ENCODE measurements at regions of chr3 and their contacts with region 1.

Region 1: DNA sequence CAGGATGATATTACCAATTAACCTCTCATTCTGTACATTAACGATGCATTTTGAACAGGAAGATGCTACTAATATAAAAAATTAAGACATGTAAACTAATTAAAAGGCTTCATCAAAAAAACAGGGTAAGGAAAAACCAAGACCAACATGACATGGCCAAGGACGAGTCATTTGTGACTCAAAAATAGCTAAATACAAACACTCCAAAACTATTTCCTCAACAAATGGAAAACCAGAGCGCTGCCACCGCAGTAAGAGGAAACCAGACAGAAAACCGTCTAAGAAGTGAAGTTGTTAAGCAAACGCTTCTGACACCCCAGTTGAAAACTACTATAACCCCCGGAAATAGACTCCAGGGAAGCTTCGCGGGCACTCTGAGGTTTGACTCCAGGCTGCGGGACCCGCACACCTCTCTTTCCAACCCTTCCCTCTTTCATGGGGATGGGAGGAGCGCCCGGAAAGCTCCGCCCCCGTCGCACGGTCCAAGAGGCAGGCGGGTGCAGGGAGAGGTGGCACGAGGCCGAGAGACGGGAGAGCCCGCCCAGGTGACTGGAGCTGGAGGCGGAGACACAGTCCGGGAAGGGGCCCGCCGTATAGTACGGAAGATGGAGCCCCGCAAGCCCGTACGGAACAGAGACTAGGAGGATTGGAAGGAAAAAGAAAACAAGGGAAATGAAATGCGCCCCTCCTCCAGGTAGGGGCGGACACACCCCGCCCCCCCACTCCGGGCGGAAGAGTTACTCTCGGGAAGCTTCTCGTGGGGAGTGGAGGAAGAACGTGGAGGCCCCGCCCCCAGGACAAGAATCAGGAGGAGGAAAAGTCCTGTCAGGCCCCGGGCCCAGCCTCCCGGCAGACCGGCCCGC is 708 bp downstream of the DCAF1 start:
- DNase-seq: peak; percentile 94
- ATAC-seq: peak; percentile 77
- H3K4me3 ChIP-seq: peak overlapping the region; percentile 83
- H3K27ac ChIP-seq: peak overlapping the region; percentile 86
- H3K4me1 ChIP-seq: peaks cover 12% of the 10 kb centered on the region
- H3K27me3 ChIP-seq: no peaks in the 10 kb centered on the region
- CTCF ChIP-seq: no peak

Region 2: DNA sequence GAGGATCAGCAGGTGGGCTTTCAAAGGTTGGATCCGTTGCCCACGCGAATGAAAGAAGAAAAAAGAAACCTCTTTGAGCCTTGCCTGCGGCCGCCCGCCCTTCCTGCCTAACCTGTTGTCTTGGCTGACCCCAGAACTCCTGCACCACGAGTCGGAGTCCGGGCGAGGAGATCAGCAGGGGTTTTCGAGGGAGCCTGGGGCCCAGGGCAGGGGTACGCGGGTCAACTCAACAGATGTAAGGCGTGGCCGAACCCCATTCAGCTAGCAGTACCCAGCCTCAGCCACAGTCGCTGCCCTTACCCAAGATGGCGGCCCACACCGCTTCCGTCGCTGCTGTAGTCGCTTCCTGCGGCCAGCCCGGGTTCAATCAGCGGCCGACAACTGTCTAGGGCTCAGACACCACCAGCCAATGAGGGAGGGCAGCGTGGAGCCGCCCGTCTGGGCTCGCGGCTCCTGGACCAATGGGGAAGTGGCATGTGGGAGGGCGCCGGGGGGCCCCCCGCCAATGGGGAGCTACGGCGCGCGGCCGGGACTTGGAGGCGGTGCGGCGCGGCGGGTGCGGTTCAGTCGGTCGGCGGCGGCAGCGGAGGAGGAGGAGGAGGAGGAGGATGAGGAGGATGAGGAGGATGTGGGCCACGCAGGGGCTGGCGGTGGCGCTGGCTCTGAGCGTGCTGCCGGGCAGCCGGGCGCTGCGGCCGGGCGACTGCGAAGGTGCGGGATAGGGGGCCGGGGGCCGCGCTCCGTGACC is 114.2 kb before region 1 on chr3 and contains the start of gene MANF:
- CTCF ChIA-PET with region 1: no interaction called
- POLR2A ChIA-PET with region 1: interaction called, 13 read pairs
- intact Hi-C with region 1: no loop called
- DNase-seq: peak; percentile 98
- ATAC-seq: peak; percentile 91
- H3K4me3 ChIP-seq: peak within 1 kb of the TSS; percentile 85
- H3K27ac ChIP-seq: peak within 1 kb of the TSS; percentile 79
- H3K4me1 ChIP-seq: peaks cover 40% of the 10 kb centered on the region
- H3K27me3 ChIP-seq: no peaks in the 10 kb centered on the region
- CTCF ChIP-seq: no peak
- total RNA-seq, gene MANF: 200 and 221 TPM in 2 replicates

Region 3: GRCh38 chr3:51538459-51539290 is 39.6 kb after region 1 on chr3 and contains the start of gene RAD54L2:
- CTCF ChIA-PET with region 1: interaction called, 3 read pairs
- POLR2A ChIA-PET with region 1: interaction called, 42 read pairs
- intact Hi-C with region 1: loop called (anchors 1 kb)
- DNase-seq: peak; percentile 89
- ATAC-seq: peak; percentile 84
- H3K4me3 ChIP-seq: peak within 1 kb of the TSS; percentile 85
- H3K27ac ChIP-seq: peak within 1 kb of the TSS; percentile 35
- H3K4me1 ChIP-seq: peaks cover 14% of the 10 kb centered on the region
- H3K27me3 ChIP-seq: no peaks in the 10 kb centered on the region
- CTCF ChIP-seq: peak; percentile 33; the same call in 1 of the 2 replicates
- total RNA-seq, gene RAD54L2: 14.3 and 17.7 TPM in 2 replicates

Region 4: DNA sequence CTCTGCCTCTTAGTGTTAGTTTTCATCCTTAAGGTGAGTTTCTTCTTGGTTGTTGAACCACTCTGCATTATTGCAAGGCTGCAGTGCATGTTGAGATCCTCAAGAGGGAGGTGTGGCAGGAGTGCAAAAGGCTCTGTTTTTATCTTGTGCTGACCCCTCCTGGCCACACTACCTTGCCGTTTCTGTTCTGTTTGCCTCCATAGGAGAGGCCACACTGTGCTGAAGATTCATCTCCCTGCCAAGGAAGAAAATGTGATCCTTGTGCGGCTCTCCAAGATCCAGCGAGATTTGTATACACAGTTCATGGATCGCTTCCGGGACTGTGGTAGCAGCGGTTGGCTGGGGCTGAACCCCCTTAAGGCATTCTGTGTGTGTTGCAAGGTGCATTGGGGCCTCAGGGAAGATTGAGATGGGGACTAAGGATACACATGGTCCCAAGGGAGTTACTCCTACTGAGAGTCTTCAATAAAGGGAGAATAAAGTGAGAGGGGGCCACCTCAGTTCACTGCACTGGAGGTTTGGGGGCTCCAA is 138.9 kb after region 1 on chr3:
- CTCF ChIA-PET with region 1: interaction called, 3 read pairs
- POLR2A ChIA-PET with region 1: no interaction called
- intact Hi-C with region 1: loop called (anchors 1 kb)
- DNase-seq: peak; percentile 76
- ATAC-seq: peak; percentile 91
- H3K4me3 ChIP-seq: peak overlapping the region; percentile 28; the same call in 1 of the 2 replicates
- H3K27ac ChIP-seq: peak overlapping the region; percentile 44
- H3K4me1 ChIP-seq: peaks cover 10% of the 10 kb centered on the region
- H3K27me3 ChIP-seq: no peaks in the 10 kb centered on the region
- CTCF ChIP-seq: peak; percentile 99

Region 5: DNA sequence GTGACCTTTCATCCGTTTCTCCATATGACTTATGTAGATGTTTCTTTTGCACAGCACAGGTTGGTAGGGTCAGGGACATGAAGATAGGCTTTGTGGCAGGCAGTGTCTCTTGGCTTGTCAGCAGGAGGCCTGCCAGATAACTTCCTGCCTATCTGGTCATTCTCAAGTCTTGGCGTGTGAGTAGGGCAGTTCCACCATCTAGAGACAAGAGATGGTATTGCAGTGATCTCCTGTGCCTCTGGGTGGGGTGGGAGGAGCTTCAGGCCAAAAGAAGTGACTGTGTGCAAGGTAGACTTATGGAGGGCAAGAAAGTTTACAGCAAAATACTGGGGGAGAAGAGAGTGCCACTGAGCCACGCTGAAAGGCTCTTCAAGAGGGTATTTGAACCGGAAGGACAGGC is 183.0 kb after region 1 on chr3:
- CTCF ChIA-PET with region 1: interaction called, 73 read pairs
- POLR2A ChIA-PET with region 1: interaction called, 6 read pairs
- intact Hi-C with region 1: loop called (anchors 1 kb)
- DNase-seq: peak; percentile 93
- ATAC-seq: peak; percentile 84
- H3K4me3 ChIP-seq: no peak overlapping the region
- H3K27ac ChIP-seq: no peak overlapping the region
- H3K4me1 ChIP-seq: peaks cover 24% of the 10 kb centered on the region
- H3K27me3 ChIP-seq: no peaks in the 10 kb centered on the region
- CTCF ChIP-seq: peak; percentile 89

Region 6: DNA sequence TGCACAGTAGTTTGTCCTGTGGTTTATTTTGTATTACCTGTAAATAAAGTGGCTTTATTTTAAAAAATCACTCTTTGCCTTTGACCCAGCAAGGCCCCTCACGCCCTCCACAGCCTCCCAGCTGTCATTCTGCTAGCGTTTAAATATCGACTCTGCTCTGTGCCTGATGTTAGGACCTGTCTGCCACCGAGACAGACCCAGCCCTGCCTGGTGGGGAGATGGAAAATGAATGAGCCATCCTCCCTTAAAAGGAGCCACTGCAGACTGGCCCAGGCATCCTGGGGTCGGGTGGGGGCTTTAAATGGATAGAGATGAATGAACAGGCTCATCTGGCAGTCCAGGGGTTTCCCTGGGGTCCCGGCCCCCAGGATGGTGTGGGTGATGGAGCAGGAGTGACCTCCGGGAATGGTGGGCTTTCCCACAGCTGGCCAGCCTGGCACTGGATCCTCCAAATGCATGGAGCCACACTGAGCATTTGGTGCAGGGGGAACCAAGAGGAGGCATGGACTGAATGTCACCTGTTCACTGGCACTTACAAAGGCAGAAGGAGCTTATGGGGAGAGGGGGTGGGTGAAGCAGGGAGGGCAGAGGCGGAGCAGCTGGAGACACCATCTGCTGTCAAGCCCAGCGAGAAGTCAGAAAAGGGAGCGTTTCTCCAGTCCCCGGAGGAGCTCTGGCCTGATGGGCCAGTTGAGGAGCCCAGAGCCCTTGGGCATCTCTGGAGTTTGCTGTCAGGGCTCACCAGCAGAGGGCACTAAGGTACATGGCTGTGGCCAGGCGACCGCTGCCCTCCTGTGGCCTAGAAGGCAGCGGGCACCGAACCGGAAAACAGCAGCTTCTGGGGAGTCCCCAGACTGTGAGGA is 219.7 kb after region 1 on chr3:
- CTCF ChIA-PET with region 1: interaction called, 14 read pairs
- POLR2A ChIA-PET with region 1: no interaction called
- intact Hi-C with region 1: no loop called
- DNase-seq: peak; percentile 80
- ATAC-seq: peak; percentile 81
- H3K4me3 ChIP-seq: no peak overlapping the region
- H3K27ac ChIP-seq: no peak overlapping the region
- H3K4me1 ChIP-seq: no peaks in the 10 kb centered on the region
- H3K27me3 ChIP-seq: no peaks in the 10 kb centered on the region
- CTCF ChIP-seq: peak; percentile 96

Region 7: DNA sequence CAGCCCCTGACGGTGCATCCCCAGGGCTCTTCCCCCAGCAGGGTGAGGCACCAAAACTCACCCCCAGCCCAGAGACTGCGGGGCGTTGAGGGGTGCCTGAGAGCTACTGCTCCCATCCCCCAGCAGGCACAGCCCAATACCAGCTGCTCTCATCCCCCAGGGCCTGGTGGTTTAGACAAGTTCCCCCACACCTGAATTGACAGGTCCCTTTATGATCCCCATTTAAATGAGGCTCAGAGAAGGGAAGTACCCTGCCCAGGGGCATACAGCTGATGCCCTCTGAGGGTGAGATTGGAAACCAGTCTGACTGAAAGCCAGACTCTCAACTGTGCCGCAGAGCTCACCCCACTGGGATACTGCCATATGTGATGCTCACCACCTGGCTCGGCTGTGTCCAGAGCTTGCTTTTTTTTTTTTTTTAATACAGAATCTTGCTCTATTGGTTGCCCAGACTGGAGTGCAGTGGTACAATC is 537.2 kb after region 1 on chr3:
- CTCF ChIA-PET with region 1: no interaction called
- POLR2A ChIA-PET with region 1: no interaction called
- intact Hi-C with region 1: no loop called
- DNase-seq: no peak
- ATAC-seq: no peak
- H3K4me3 ChIP-seq: no peak overlapping the region
- H3K27ac ChIP-seq: no peak overlapping the region
- H3K4me1 ChIP-seq: peaks cover 19% of the 10 kb centered on the region
- H3K27me3 ChIP-seq: no peaks in the 10 kb centered on the region
- CTCF ChIP-seq: no peak

Region 8: DNA sequence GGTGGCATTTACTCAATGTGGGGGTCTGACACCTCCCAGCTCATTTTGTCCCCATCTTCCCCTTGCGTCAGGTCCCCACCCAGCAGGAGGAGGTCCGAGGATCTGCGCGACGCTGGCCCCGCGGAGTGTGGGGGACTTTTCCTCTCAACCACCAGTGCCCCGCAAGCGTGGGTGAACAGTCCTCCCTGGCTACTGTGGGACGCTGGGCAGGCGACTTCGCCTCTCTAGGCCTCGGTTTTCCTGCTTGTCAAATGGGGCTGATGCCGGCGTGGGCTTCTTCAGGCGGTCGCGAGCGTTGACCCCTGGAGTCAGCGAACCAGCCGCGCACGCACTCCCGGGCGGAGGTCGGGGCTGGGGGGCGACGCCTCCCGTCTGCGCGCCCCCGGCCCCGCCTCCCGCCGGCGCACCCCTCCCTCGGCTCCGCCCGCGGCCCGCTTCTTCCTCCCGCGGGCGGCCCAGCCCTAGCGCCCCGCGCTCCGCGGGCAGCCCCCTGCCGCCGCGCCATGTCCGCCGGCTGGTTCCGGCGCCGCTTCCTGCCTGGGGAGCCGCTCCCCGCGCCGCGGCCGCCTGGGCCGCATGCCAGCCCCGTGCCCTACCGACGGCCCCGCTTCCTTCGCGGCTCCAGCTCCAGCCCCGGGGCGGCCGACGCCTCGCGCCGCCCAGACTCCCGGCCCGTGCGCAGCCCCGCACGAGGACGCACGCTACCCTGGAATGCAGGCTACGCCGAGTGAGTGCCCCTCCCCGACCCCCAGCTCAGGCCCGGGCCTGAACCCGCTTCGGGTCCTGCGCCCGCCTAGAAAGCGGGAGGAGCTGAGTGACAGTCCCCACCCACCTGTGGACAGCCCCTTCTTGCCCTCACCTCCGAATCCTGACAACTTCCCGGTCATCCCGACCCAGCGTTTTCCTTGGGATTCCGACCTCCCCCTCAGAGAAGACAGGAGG is 746.5 kb after region 1 on chr3 and contains the start of gene PPM1M:
- CTCF ChIA-PET with region 1: no interaction called
- POLR2A ChIA-PET with region 1: interaction called, 35 read pairs
- intact Hi-C with region 1: no loop called
- DNase-seq: peak; percentile 62
- ATAC-seq: peak; percentile 54
- H3K4me3 ChIP-seq: peak within 1 kb of the TSS; percentile 76
- H3K27ac ChIP-seq: no peak within 1 kb of the TSS
- H3K4me1 ChIP-seq: peaks cover 31% of the 10 kb centered on the region
- H3K27me3 ChIP-seq: no peaks in the 10 kb centered on the region
- CTCF ChIP-seq: no peak
- total RNA-seq, gene PPM1M: 8.5 and 12.4 TPM in 2 replicates

Measured in PC-3 (cell line).